A673 (cell line): ENCODE measurements at regions of chr15 and their contacts with region 1.

Region 1: DNA sequence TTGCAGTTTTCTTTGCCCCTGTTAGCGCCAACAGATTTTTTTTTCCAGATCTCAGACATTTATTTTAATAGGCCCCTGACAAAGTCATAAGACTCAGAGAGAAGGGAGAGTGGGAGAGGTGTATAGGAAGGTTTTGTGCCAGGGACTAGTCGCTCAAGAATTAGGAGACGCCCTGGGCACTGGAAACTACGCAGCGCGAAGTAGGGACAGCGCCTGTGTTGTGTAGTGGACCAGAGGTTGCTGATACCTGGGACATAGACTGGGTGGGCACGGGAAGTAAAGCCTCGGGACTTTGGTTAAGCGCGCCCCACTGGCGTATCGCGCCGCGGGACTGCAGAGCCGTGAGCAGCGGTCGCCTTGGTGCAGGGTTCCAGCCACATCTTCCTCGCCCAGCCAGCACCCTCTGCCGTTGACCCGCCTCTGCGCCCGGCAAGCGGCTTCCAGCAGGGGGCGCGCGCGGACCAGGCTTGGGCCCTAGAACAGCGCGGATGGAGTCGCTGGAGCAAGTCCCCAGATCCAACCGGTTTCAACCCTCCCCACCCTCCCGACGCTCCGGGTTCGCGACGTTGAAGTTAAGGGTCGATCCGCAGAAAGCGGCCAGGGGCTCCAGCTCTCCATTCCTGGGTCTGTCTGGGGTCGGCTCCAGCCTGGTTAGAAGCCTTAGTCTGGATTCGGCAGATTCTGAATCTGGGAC is 3.0 kb upstream of the ISLR2 start:
- DNase-seq: peak; percentile 94
- H3K4me3 ChIP-seq: peak overlapping the region; percentile 42
- H3K27ac ChIP-seq: no peak overlapping the region
- H3K4me1 ChIP-seq: peaks cover 22% of the 10 kb centered on the region
- H3K27me3 ChIP-seq: peaks cover 44% of the 10 kb centered on the region
- CTCF ChIP-seq: peak; percentile 98

Region 2: DNA sequence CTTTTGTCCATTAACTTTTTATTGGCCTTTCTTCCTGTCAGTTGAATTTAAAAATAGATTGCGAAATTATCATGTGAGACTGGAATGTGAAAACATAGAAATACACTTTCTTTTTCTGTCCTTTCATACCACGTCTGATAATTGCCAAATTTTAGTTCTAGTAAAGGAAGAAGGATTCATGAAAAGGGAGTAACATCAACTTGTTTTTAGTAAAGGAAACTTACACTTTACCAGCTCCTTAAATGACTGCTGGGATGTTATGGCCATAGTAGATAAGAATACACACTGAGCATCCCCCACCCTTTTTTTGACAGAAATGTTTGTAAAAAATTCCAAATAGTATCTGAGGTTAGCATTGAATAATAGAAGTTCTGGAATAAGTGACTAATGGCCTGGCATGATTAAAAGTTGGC is 937.2 kb before region 1 on chr15:
- CTCF ChIA-PET with region 1: no interaction called
- POLR2A ChIA-PET with region 1: no interaction called
- intact Hi-C with region 1: no loop called
- DNase-seq: peak; percentile 30
- H3K4me3 ChIP-seq: no peak overlapping the region
- H3K27ac ChIP-seq: no peak overlapping the region
- H3K4me1 ChIP-seq: peaks cover 7% of the 10 kb centered on the region
- H3K27me3 ChIP-seq: no peaks in the 10 kb centered on the region
- CTCF ChIP-seq: no peak

Region 3: GRCh38 chr15:74146277-74146800 is 18.9 kb after region 1 on chr15:
- CTCF ChIA-PET with region 1: interaction called, 13 read pairs
- POLR2A ChIA-PET with region 1: no interaction called
- intact Hi-C with region 1: no loop called
- DNase-seq: no peak
- H3K4me3 ChIP-seq: no peak overlapping the region
- H3K27ac ChIP-seq: no peak overlapping the region
- H3K4me1 ChIP-seq: no peaks in the 10 kb centered on the region
- H3K27me3 ChIP-seq: no peaks in the 10 kb centered on the region
- CTCF ChIP-seq: no peak

Region 4: DNA sequence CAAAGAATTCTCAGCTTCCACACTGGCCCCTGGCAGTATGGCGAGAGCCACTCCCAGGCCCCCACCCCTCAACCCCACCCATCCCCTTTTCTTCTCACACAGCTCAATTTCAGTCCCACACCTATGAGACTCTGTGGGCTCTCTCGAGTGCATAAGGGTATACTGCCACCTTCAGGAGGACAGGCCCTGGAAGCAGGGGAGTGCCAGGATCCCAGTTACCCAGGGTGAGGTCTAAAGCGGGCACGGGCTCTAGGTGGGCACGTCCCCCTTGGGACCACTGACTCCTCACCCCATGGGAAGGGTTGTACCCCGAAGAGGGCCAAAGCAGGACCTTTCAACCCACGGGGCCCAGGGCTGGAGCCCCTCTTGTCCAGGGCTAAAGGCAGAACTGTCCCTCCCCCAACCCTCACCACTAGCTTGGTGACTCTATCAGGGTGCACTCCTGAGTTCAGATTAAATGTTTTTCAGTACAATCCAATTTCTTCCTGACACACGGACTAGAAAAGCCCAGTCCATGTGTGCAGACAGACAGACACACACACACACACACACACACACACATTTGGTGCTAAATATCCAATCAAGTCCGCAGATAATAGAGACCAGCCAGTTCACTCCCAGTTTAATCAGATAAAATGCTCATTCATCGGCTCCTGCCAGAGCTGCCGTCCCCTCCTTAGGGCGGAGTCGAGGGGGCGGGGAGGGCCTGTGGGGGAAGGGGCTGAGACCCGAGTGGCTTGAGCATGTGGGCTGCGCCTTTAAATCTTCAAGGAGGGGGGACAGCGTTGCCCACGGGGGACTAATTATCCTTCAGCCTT is 180.6 kb after region 1 on chr15:
- CTCF ChIA-PET with region 1: interaction called, 29 read pairs
- POLR2A ChIA-PET with region 1: interaction called, 3 read pairs
- intact Hi-C with region 1: loop called (anchors 1 kb)
- DNase-seq: peak; percentile 86
- H3K4me3 ChIP-seq: no peak overlapping the region
- H3K27ac ChIP-seq: no peak overlapping the region
- H3K4me1 ChIP-seq: peaks cover 28% of the 10 kb centered on the region
- H3K27me3 ChIP-seq: no peaks in the 10 kb centered on the region
- CTCF ChIP-seq: peak; percentile 85

Region 5: GRCh38 chr15:74322181-74323076 is 195.0 kb after region 1 on chr15:
- CTCF ChIA-PET with region 1: interaction called, 9 read pairs
- POLR2A ChIA-PET with region 1: no interaction called
- intact Hi-C with region 1: loop called (anchors 1 kb)
- DNase-seq: peak; percentile 76
- H3K4me3 ChIP-seq: no peak overlapping the region
- H3K27ac ChIP-seq: no peak overlapping the region
- H3K4me1 ChIP-seq: peaks cover 29% of the 10 kb centered on the region
- H3K27me3 ChIP-seq: no peaks in the 10 kb centered on the region
- CTCF ChIP-seq: peak; percentile 92